Spleen (tissue), 13 donors: ENCODE measurements at regions of chr15 and their contacts with region 1.

Region 1: GRCh38 chr15:43410572-43411214 is 39.8 kb downstream of the TUBGCP4 start:
- DNase-seq: no peak
- H3K4me3 ChIP-seq: no peak overlapping the region
- H3K27ac ChIP-seq: no peak overlapping the region
- H3K4me1 ChIP-seq: no peaks in the 10 kb centered on the region
- H3K27me3 ChIP-seq: no peaks in the 10 kb centered on the region
- CTCF ChIP-seq: no peak
- POLR2A ChIP-seq: no peak

Region 2: DNA sequence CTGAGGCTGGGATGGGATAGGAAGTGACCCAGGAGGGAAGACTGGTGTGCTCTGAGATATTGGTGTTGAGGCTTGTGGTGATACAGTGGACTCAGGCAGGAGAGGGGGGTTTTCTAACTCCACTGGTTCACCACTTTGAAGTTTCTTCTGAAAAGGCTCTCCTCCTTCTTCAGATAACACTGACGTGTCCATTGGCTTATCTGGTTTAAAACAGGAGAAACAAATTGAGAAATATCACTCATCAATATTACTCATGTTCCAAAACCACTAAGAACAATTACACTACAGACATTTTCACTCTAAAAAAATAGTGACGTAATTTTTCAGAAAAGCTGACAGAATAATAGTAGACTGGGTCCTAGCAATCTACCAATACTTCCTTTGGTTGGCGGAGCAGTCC is 59.2 kb after region 1 on chr15:
- intact Hi-C with region 1: loop called (anchors 10 kb)
- DNase-seq: no peak
- H3K4me3 ChIP-seq: no peak overlapping the region
- H3K27ac ChIP-seq: no peak overlapping the region
- H3K4me1 ChIP-seq: no peaks in the 10 kb centered on the region
- H3K27me3 ChIP-seq: no peaks in the 10 kb centered on the region
- CTCF ChIP-seq: no peak
- POLR2A ChIP-seq: no peak